Endothelial cell of umbilical vein (primary cell): ENCODE measurements at regions of chr5 and their contacts with region 1.

Region 1: DNA sequence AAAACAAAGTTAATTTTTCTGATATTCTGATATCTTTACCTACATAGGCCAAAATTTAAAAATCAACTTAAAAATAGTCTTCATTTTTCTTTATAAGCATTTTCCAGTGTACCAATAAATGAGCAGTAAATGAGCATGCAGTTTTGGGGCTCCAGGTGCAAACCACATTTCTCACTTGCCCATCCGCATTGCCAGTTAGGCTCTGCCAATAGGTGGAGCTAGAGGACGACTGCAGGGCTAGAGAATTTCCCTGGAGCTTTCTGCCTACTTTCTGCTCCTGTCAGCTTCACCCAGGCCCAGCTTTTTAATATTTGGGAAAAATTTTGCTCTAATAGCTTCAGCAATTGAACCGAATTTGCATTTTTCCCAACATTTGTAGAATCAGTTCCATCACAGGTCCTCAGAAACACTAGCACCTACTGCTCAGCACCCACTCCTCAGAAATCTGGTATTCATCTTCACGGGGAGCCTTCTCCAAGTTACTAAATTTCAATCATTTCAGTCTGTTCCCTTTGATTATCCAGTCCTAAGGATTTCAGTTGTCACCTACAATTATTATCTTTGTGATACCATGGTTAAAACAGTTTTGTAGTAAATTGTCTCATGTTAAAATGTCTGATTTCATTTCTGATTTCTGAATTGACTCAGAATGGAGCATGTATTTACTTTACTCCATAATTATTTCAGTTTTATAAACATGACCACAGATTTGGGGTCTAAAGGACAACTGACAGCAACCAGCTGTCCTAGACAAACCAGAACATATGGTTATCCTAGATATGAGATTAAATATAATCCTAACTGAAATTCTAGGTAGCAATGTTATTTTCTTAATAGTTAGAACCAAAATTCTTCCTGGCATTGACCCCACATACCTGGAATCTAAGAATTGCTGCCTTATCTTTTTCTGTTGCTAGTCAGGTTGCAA is 104.6 kb upstream of the FAM174A start:
- DNase-seq: peak; percentile 54
- H3K4me3 ChIP-seq: no peak overlapping the region
- H3K27ac ChIP-seq: no peak overlapping the region
- H3K4me1 ChIP-seq: no peaks in the 10 kb centered on the region
- H3K27me3 ChIP-seq: no peaks in the 10 kb centered on the region
- CTCF ChIP-seq: peak; percentile 90 to 96
- POLR2A ChIP-seq: no peak

Region 2: DNA sequence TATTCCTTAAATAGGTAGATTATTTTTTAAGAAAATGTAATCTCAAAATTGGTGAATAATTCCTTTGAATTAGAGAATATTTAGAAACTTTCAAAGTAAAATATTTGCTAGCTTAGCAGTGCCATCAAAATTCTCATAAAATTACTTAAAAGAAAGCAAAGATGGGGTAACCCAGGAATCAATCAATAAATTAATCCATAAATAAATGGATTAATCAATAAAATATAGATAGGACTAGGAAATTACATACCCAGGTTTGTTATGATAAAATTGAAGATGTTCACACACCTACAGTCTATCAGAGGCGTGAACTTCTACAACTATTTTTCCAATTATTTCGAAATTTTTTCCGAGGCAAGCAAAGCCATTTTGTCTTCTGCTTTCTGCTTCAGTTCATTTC is 392.8 kb before region 1 on chr5:
- CTCF ChIA-PET with region 1: no interaction called
- POLR2A ChIA-PET with region 1: no interaction called
- dilution Hi-C with region 1: no loop called
- intact Hi-C with region 1: no loop called
- DNase-seq: no peak
- H3K4me3 ChIP-seq: no peak overlapping the region
- H3K27ac ChIP-seq: no peak overlapping the region
- H3K4me1 ChIP-seq: no peaks in the 10 kb centered on the region
- H3K27me3 ChIP-seq: no peaks in the 10 kb centered on the region
- CTCF ChIP-seq: no peak
- POLR2A ChIP-seq: no peak

Region 3: DNA sequence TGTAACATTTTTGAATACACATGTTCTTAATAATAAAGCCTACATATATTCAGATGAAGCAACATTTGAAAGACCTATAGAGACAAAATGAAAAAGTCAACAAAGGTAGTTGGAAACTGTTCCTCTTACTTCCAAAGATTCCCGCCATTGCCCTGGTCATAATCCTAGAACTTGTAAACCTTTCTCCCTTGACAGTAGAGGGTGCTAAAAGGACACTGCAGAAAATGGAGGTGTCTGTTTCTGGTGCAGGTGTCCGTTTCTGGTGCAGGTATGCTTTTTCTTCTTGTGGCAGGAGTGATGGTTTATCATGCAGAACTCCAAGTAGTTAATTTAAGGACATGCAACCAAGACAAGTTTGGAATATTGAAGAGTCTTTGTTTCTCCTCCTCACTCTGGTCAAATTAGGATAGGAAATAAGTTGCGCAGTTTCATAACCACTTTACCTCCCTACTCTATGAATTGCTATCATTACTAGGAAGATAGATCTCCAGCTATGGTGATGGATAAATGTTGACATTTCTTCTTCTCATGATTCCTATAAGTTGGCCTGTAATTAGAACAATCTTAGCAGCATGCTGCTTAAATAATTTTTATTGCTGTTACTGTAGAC is 48.7 kb after region 1 on chr5:
- CTCF ChIA-PET with region 1: interaction called, 3 read pairs
- POLR2A ChIA-PET with region 1: no interaction called
- dilution Hi-C with region 1: no loop called
- intact Hi-C with region 1: loop called (anchors 2 kb)
- DNase-seq: peak; percentile 24
- H3K4me3 ChIP-seq: no peak overlapping the region
- H3K27ac ChIP-seq: no peak overlapping the region
- H3K4me1 ChIP-seq: no peaks in the 10 kb centered on the region
- H3K27me3 ChIP-seq: no peaks in the 10 kb centered on the region
- CTCF ChIP-seq: peak; percentile 20 to 25
- POLR2A ChIP-seq: no peak

Region 4: DNA sequence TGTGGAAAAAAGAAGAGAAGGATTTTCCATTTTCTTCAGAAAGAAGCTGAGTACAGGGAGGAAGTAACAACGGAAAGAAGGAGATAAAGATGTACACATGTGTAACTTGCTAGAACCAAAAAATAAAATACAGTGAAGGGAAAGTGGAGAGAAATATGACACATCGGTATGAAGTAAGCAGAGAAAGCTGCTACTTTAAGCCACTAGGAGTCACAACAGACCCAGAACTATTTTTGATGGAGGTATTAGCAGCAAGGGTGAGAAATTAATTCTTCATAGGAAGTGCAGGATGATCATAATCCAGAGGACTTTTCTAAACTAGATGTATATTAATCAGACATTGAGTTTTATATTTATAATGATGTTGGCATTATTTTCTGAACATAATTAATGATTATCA is 193.2 kb after region 1 on chr5:
- CTCF ChIA-PET with region 1: interaction called, 17 read pairs
- POLR2A ChIA-PET with region 1: no interaction called
- dilution Hi-C with region 1: no loop called
- intact Hi-C with region 1: loop called (anchors 5 kb)
- DNase-seq: peak; percentile 67
- H3K4me3 ChIP-seq: no peak overlapping the region
- H3K27ac ChIP-seq: no peak overlapping the region
- H3K4me1 ChIP-seq: peaks cover 4% of the 10 kb centered on the region
- H3K27me3 ChIP-seq: no peaks in the 10 kb centered on the region
- CTCF ChIP-seq: peak; percentile 32 to 46
- POLR2A ChIP-seq: no peak

Region 5: DNA sequence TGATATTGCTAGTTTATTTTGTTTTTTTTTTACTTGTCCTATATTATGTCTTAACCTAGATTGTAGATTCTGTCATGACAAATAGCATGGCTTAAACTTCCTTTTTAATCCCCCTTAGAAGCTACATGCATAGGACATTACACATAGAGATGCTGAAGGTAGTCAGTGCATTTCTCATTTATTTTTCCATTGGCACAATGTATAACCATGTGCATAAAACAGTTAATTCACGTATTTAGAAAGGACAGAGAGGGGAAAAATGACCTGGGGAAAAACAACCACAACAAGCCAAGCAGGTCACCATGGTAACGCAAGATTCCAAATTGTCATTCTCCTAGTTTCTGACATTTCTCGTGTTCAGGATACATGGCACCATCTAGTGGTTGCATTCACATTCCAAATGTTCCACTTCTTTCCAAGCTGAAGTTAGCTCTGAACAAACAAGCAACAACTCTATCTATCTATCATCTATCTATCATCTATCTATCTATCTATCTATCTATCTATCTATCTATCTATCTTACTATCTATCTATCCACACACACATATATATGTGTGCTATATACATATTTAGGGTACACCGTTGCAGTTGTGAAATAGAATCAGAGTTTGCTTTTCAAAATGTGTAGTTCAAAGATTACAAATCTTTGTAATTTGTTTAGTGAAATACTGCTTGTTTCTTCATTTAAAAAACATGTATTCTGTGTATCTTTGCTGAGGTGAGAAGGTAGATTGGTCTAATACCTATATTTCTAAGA is 959.8 kb after region 1 on chr5:
- CTCF ChIA-PET with region 1: interaction called, 34 read pairs
- POLR2A ChIA-PET with region 1: no interaction called
- dilution Hi-C with region 1: no loop called
- intact Hi-C with region 1: loop called (anchors 1 kb)
- DNase-seq: peak; percentile 78
- H3K4me3 ChIP-seq: no peak overlapping the region
- H3K27ac ChIP-seq: no peak overlapping the region
- H3K4me1 ChIP-seq: no peaks in the 10 kb centered on the region
- H3K27me3 ChIP-seq: no peaks in the 10 kb centered on the region
- CTCF ChIP-seq: peak; percentile 49 to 60
- POLR2A ChIP-seq: no peak